Mammary epithelial cell (primary cell): ENCODE measurements at regions of chr1 and their contacts with region 1.

Region 1: DNA sequence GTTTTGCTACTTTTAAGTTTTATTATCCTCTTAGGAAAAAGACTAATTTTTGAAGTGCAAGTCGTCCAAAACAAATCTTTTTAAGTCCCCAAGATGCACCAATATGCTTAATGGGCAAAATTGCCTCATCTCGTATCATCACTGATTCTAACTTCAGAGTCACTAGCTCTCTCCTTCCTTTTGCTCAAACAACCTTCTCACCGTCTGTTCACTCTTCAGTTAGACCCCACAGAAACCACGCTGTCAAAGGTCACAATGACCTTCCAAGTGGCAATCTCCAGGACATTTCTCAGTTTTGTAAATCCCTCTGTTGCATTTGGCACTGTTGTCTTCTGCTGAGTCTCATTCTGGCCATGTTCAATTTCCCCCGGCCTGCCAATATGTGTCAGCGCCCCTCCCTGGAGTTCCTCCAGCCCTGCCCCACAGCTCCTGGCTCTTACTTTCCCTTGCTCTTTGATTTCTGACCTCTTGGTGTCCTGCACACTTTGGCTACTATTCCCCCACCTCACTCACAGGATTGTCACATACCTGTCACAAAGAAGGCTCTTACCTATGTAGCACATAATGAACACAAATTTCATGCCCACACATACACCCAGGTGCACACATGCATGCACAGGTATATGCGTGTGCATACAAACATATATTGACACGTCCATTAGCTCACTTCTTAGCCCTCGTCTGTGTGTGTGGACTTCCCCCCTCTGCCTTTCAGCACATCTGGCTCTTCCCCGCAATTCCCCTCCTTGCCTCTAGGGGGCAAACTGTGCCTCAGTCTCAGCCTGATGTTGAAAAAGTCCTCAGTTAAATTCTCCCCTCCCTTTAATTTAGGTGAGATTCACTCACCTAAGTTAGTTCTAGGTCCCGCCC is 354.0 kb upstream of the DUSP10 start:
- DNase-seq: no peak
- H3K4me3 ChIP-seq: no peak overlapping the region
- H3K27ac ChIP-seq: no peak overlapping the region
- H3K4me1 ChIP-seq: peaks cover 16% of the 10 kb centered on the region
- H3K27me3 ChIP-seq: no peaks in the 10 kb centered on the region
- CTCF ChIP-seq: peak; percentile 68 to 88

Region 2: GRCh38 chr1:221419513-221420088 is 676.2 kb before region 1 on chr1:
- CTCF ChIA-PET with region 1: no interaction called
- dilution Hi-C with region 1: no loop called
- in situ Hi-C with region 1: no loop called
- intact Hi-C with region 1: no loop called
- DNase-seq: peak; percentile 95
- H3K4me3 ChIP-seq: no peak overlapping the region
- H3K27ac ChIP-seq: peak overlapping the region; percentile 69
- H3K4me1 ChIP-seq: peaks cover 28% of the 10 kb centered on the region
- H3K27me3 ChIP-seq: no peaks in the 10 kb centered on the region
- CTCF ChIP-seq: no peak

Region 3: DNA sequence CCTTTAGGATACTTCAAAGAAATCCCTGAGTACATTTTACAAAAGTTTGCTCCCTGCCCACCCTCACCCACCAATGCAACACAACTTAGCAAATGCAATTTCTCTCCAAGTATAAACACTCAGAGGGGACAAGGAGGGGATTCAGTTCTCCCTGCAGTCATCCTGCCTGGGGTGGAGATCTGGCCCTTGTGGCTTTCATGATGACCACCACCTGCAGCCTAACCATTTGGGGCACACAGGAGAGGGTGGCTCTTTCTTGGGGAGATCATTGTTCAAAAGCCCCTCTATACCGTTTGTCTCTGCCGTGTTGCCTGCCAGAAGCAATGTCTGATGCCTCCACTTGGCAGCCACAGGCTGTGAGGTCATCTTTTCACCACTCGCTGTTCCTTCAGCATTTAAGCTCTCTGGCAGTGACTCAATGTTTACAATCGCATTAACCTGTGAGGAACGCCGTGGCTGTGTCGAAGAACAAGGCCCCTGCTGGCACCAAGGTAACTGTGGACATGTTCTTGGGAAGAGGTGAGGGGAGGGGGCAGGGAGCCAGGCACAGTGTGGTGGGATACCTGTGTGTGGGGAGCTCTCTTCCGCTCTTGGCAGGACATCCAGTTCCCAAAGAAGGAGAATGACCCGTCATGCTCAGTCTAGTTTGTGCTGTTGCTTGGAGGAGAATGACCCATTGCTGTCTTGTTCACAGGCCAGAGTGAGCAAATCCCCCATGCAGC is 250.0 kb before region 1 on chr1:
- CTCF ChIA-PET with region 1: no interaction called
- dilution Hi-C with region 1: no loop called
- in situ Hi-C with region 1: no loop called
- intact Hi-C with region 1: no loop called
- DNase-seq: peak; percentile 97
- H3K4me3 ChIP-seq: no peak overlapping the region
- H3K27ac ChIP-seq: peak overlapping the region; percentile 96
- H3K4me1 ChIP-seq: peaks cover 28% of the 10 kb centered on the region
- H3K27me3 ChIP-seq: no peaks in the 10 kb centered on the region
- CTCF ChIP-seq: peak in 1 of 2 donors; percentile 10

Region 4: GRCh38 chr1:222064388-222065211 is 31.2 kb before region 1 on chr1:
- CTCF ChIA-PET with region 1: no interaction called
- dilution Hi-C with region 1: loop called (anchors 5 kb)
- in situ Hi-C with region 1: no loop called
- intact Hi-C with region 1: no loop called
- DNase-seq: peak; percentile 84
- H3K4me3 ChIP-seq: no peak overlapping the region
- H3K27ac ChIP-seq: peak overlapping the region; percentile 59
- H3K4me1 ChIP-seq: peaks cover 13% of the 10 kb centered on the region
- H3K27me3 ChIP-seq: no peaks in the 10 kb centered on the region
- CTCF ChIP-seq: no peak

Region 5: DNA sequence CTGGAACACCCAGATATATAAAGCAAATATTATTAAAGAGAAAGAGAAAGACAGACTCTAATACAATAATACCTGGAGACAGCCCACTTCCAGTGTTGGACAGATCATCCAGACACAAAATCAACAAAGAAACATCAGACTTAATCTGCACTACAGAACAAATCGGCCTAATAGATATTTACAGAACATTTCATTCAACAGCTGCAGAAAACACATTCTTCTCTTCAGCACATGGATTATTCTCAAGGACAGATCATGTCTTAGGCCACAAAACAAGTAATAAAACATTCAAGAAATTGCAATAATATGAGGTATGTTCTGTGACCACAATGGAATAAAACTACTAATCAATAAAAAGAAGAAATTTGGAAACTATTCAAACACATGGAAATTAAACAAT is 44.4 kb after region 1 on chr1:
- CTCF ChIA-PET with region 1: no interaction called
- dilution Hi-C with region 1: loop called (anchors 5 kb)
- in situ Hi-C with region 1: no loop called
- intact Hi-C with region 1: no loop called
- DNase-seq: no peak
- H3K4me3 ChIP-seq: no peak overlapping the region
- H3K27ac ChIP-seq: no peak overlapping the region
- H3K4me1 ChIP-seq: no peaks in the 10 kb centered on the region
- H3K27me3 ChIP-seq: no peaks in the 10 kb centered on the region
- CTCF ChIP-seq: no peak